PC-3 (cell line): ENCODE measurements at regions of chr14 and their contacts with region 1.

Region 1: DNA sequence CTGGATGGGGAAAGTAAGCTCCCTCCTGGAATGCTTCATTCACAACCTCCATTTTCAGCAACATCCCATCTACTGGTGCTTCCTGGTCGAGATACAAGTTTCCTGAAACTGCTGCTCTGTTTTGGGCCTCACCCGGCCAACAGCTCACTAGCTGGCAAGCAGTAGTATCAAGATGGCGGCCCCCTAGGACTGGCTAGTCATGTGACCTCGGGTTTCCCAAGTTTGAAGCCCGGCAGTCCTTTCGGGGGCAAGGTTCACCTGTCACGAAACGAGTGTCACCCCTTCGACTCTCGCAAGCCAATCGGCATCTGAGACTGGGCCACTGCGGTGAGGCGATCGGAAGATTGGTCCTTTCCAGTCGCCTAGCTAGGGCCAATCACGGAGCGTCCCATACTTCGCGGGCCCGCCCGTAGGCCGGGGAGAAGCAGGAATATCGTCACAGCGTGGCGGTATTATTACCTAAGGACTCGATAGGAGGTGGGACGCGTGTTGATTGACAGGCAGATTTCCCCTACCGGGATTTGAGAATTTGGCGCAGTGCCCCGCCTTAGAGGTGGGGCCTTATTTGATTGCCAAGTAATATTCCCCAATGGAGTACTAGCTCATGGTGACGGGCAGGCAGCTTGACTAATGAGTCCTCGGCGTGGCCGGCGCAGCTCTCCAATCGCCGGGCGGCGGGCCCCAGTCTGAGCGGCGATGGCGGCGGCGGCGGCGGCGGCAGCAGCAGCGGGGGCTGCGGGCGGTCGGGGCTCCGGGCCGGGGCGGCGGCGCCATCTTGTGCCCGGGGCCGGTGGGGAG is at the start of gene PABPN1:
- DNase-seq: peak; percentile 100
- ATAC-seq: peak; percentile 91
- H3K4me3 ChIP-seq: peak within 1 kb of the TSS; percentile 99
- H3K27ac ChIP-seq: peak within 1 kb of the TSS; percentile 80
- H3K4me1 ChIP-seq: peaks cover 17% of the 10 kb centered on the region
- H3K27me3 ChIP-seq: no peaks in the 10 kb centered on the region
- CTCF ChIP-seq: no peak
- total RNA-seq, gene PABPN1: 89.1 and 116 TPM in 2 replicates

Region 2: DNA sequence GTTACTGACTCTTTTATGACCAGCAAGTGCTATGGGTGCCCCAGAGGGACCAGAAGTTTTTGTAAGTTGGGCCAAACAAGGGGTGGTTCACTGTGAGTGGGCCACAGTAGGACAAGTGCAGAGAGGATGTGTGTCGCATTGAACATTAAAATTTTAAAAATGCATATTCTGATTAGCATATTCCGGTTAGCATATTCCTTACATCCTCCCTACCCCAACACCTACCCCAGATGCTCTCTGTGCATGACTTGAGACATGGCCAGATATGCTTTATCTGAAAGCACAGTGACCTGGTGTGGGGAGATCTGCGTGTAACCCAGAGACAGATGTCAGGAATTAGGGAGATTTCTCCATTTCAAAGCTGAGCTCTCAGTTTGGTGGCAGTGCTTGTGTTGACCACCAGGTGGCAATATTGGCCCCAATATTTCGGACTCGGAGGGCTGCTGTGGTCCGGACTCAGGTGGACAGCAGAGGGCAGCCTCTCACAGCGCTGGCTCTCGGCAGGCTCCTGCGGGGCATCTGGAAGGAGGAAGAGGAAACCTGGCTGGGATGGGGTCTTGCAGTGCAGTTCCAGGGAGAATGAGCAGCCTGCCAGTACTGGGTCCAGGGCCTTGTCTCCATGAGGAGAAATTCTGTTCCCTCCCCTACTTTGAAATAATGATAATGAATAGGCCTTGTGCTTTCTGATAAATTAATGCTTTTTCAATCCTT is 200.3 kb before region 1 on chr14:
- CTCF ChIA-PET with region 1: interaction called, 14 read pairs
- POLR2A ChIA-PET with region 1: no interaction called
- intact Hi-C with region 1: no loop called
- DNase-seq: peak; percentile 92
- ATAC-seq: peak; percentile 93
- H3K4me3 ChIP-seq: peak overlapping the region; percentile 25; the same call in 1 of the 2 replicates
- H3K27ac ChIP-seq: no peak overlapping the region; the same call in 1 of the 2 replicates
- H3K4me1 ChIP-seq: peaks cover 16% of the 10 kb centered on the region
- H3K27me3 ChIP-seq: no peaks in the 10 kb centered on the region
- CTCF ChIP-seq: peak; percentile 100

Region 3: GRCh38 chr14:23301288-23301968 is 19.5 kb before region 1 on chr14:
- CTCF ChIA-PET with region 1: interaction called, 5 read pairs
- POLR2A ChIA-PET with region 1: interaction called, 13 read pairs
- intact Hi-C with region 1: loop called (anchors 1 kb)
- DNase-seq: peak; percentile 99
- ATAC-seq: peak; percentile 75
- H3K4me3 ChIP-seq: peak overlapping the region; percentile 79
- H3K27ac ChIP-seq: peak overlapping the region; percentile 63
- H3K4me1 ChIP-seq: peaks cover 20% of the 10 kb centered on the region
- H3K27me3 ChIP-seq: no peaks in the 10 kb centered on the region
- CTCF ChIP-seq: peak; percentile 78

Region 4: GRCh38 chr14:23306410-23307145 is 14.4 kb before region 1 on chr14 and contains the start of gene BCL2L2:
- CTCF ChIA-PET with region 1: interaction called, 3 read pairs
- POLR2A ChIA-PET with region 1: interaction called, 16 read pairs
- intact Hi-C with region 1: loop called (anchors 1 kb)
- DNase-seq: peak; percentile 87
- ATAC-seq: peak; percentile 55
- H3K4me3 ChIP-seq: peak within 1 kb of the TSS; percentile 86
- H3K27ac ChIP-seq: peak within 1 kb of the TSS; percentile 50
- H3K4me1 ChIP-seq: peaks cover 24% of the 10 kb centered on the region
- H3K27me3 ChIP-seq: no peaks in the 10 kb centered on the region
- CTCF ChIP-seq: no peak
- total RNA-seq, gene BCL2L2: 32.4 and 33.5 TPM in 2 replicates

Region 5: DNA sequence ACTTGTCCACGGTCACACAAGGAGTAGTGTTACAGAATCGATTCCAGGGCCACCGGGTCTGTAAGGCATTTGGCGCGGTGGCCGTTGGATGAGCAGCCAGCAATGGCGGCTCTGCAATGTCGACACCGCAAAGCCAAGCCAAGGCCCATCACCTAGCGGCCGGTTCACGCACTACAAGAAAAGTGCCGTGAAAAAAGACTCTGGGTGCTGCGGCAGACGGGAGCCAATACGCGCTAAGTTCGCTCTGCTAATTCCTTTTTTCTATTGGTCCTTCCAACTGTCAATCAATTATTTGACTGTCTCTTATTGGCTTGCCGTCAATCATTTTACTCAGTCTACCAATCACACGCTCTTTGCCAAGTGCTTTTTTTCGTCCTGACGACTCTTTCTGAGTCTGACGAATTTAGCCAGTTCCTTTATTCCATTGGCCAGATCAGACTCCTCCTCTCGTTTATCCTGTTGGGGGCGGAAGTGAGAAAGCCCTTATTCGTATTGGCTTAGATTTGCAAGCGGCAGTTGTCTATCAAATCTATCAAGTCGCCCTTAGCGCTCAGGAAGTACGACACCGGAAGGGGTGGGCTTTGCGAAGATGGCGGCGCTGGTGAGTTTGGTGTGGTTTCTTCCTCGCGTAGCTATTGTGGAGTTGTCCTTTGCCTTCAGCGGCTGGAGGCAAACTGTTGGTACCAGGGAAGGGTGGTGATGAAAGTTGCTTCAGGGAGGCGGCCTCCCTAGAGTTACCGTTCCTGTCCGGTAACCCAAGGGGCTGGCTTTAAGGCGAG is 148.3 kb after region 1 on chr14 and contains the start of gene NGDN:
- CTCF ChIA-PET with region 1: no interaction called
- POLR2A ChIA-PET with region 1: no interaction called
- intact Hi-C with region 1: loop called (anchors 1 kb)
- DNase-seq: peak; percentile 100
- ATAC-seq: peak; percentile 96
- H3K4me3 ChIP-seq: peak within 1 kb of the TSS; percentile 89
- H3K27ac ChIP-seq: no peak within 1 kb of the TSS; the same call in 1 of the 2 replicates
- H3K4me1 ChIP-seq: peaks cover 8% of the 10 kb centered on the region; the same call in 1 of the 2 replicates
- H3K27me3 ChIP-seq: no peaks in the 10 kb centered on the region
- CTCF ChIP-seq: peak; percentile 74
- total RNA-seq, gene NGDN: 57.6 and 77.3 TPM in 2 replicates

Region 6: GRCh38 chr14:23681337-23681736 is 360.4 kb after region 1 on chr14:
- CTCF ChIA-PET with region 1: no interaction called
- POLR2A ChIA-PET with region 1: no interaction called
- intact Hi-C with region 1: no loop called
- DNase-seq: no peak
- ATAC-seq: no peak
- H3K4me3 ChIP-seq: no peak overlapping the region
- H3K27ac ChIP-seq: no peak overlapping the region
- H3K4me1 ChIP-seq: no peaks in the 10 kb centered on the region
- H3K27me3 ChIP-seq: peaks cover 50% of the 10 kb centered on the region
- CTCF ChIP-seq: no peak